GM12878 (cell line): ENCODE measurements at regions of chr7 and their contacts with region 1.

Region 1: GRCh38 chr7:107168233-107169119 is at the start of gene HBP1:
- DNase-seq: peak; percentile 100
- ATAC-seq: peak; percentile 90
- H3K4me3 ChIP-seq: peak within 1 kb of the TSS; percentile 86
- H3K27ac ChIP-seq: peak within 1 kb of the TSS; percentile 90
- H3K4me1 ChIP-seq: peaks cover 17% of the 10 kb centered on the region
- H3K27me3 ChIP-seq: no peaks in the 10 kb centered on the region
- CTCF ChIP-seq: no peak
- EP300 ChIP-seq: peak in 1 of 2 experiments; percentile 26; a peak in 1 of 4 replicates
- POLR2A ChIP-seq: peak; percentile 78
- RAD21 ChIP-seq: no peak
- polyA plus RNA-seq, gene HBP1: 8.5 to 10.2 TPM

Region 2: DNA sequence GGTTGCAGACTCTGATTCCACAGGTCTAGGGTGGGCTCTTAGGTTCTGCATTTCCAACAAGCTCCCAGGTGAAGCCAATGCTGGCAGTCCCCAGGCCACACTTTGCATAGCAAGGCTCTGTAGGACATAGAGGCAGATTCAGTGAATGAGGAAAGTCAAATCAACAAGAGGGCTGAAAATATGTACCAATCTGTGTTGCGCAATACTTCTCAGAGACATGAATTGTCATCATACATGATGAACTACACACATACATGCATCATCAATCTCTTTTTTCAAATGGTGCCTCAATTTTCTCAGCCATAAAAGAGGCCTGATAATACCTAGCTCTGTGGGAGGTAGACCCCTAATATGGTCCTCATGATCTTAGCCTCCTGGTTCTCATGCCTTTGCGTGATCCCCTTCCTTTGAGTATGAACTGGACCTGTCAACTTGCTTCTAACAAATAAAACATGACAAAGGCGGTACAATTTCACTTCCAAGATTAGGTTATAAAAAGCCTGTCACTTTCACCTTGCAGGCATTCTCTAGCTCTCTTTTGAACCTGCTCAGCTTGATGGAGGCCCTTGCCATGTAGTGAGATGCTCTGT is 254.4 kb before region 1 on chr7:
- CTCF ChIA-PET with region 1: no interaction called
- POLR2A ChIA-PET with region 1: no interaction called
- RAD21 ChIA-PET with region 1: no interaction called
- SMC1A ChIA-PET with region 1: no interaction called
- in situ Hi-C with region 1: no loop called
- intact Hi-C with region 1: no loop called
- DNase-seq: no peak
- ATAC-seq: no peak
- H3K4me3 ChIP-seq: no peak overlapping the region
- H3K27ac ChIP-seq: no peak overlapping the region
- H3K4me1 ChIP-seq: peaks cover 2% of the 10 kb centered on the region; the same call in 1 of the 2 replicates
- H3K27me3 ChIP-seq: peaks cover 0 to 9% of the 10 kb centered on the region in 2 experiments; a peak in 3 of 4 replicates
- CTCF ChIP-seq: no peak
- EP300 ChIP-seq: no peak
- POLR2A ChIP-seq: no peak
- RAD21 ChIP-seq: no peak

Region 3: GRCh38 chr7:107180378-107180777 is 11.9 kb after region 1 on chr7:
- CTCF ChIA-PET with region 1: interaction called, 3 read pairs
- POLR2A ChIA-PET with region 1: interaction called, 20 read pairs
- RAD21 ChIA-PET with region 1: interaction called, 3 read pairs
- SMC1A ChIA-PET with region 1: interaction called, 6 read pairs
- in situ Hi-C with region 1: no loop called
- intact Hi-C with region 1: no loop called
- DNase-seq: no peak
- ATAC-seq: peak; percentile 63
- H3K4me3 ChIP-seq: no peak overlapping the region
- H3K27ac ChIP-seq: no peak overlapping the region
- H3K4me1 ChIP-seq: no peaks in the 10 kb centered on the region
- H3K27me3 ChIP-seq: no peaks in the 10 kb centered on the region
- CTCF ChIP-seq: no peak
- EP300 ChIP-seq: no peak
- POLR2A ChIP-seq: no peak
- RAD21 ChIP-seq: no peak

Region 4: DNA sequence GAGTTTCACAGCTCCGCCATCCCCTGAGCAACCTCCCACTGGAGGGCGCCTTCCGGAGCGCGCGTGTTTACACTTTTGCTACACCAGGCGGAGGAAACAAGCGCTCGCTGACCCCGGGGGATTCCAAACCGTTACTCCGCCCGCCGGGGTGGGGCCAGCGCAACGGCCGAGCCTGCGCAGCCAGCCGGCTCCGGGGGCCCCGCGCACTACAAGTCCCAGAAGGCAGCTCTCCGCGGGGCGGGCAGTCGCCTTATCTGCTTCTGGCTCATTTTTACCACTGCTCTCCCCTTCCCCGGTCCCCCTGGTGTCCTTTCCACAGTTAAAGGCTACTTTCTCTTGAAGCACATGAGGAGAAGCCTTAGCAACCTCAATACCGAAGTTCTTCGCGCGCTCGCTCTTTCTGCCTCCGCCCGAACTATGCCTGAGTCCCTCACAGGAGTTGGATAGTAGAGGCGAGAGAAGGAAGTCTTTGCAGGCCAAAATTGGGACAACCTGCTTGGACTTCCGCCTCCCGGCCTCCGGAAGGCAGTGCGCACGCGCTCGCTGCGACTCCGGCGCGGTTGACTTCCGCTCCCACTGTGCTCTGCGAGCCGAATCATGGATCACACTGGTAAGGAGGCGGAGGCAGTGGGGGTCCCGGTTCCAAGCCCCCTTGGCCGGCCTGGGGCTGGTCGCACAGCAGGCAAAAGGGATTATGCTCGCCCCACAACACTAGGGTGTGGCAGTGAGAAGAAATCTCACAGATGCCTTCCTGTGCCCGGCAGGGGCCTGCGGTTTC is 575.3 kb after region 1 on chr7 and contains the start of gene CBLL1:
- CTCF ChIA-PET with region 1: no interaction called
- POLR2A ChIA-PET with region 1: interaction called, 14 read pairs
- RAD21 ChIA-PET with region 1: interaction called, 11 read pairs
- SMC1A ChIA-PET with region 1: no interaction called
- in situ Hi-C with region 1: no loop called
- intact Hi-C with region 1: no loop called
- DNase-seq: peak; percentile 79
- ATAC-seq: peak; percentile 94
- H3K4me3 ChIP-seq: peak within 1 kb of the TSS; percentile 87
- H3K27ac ChIP-seq: peak within 1 kb of the TSS; percentile 100
- H3K4me1 ChIP-seq: peaks cover 8% of the 10 kb centered on the region
- H3K27me3 ChIP-seq: no peaks in the 10 kb centered on the region
- CTCF ChIP-seq: peak; percentile 67 to 74 (median 72)
- EP300 ChIP-seq: peak in 1 of 2 experiments; percentile 23; a peak in 1 of 4 replicates
- POLR2A ChIP-seq: peak; percentile 89
- RAD21 ChIP-seq: peak; percentile 54
- polyA plus RNA-seq, gene CBLL1: 8.6 to 9.3 TPM